ENCODE measurements at regions of chr17 and their contacts with region 1.

Region 1: GRCh38 chr17:79741751-79742588 is 11.2 kb downstream of the ENPP7 start:
- DNase-seq: peak; percentile 87
- ATAC-seq: peak; percentile 64
- H3K4me3 ChIP-seq: peak overlapping the region; percentile 59
- H3K27ac ChIP-seq: no peak overlapping the region
- H3K4me1 ChIP-seq: peaks cover 36% of the 10 kb centered on the region
- H3K27me3 ChIP-seq: no peaks in the 10 kb centered on the region
- CTCF ChIP-seq: peak; percentile 98

Region 2: DNA sequence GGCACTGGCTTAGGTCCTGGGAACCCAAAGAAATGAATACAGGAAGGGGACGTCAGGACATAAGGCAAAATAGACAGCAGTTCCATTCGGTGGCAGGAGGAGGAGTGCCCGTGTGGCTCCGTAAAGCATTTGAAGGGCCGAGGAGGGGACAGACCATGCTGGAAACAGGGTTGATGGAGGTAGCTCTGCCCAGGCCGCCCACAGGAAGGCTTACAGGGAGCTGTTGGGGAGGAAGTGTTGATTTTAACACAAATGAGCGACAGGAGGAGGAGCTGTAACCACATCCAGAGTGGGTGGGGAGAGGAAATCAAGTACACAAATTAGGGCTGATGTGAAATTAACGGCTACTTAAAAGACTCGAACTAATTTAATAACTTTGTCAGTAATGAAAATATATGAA is 185.7 kb before region 1 on chr17:
- CTCF ChIA-PET with region 1: interaction called, 3 read pairs
- POLR2A ChIA-PET with region 1: interaction called, 11 read pairs
- intact Hi-C with region 1: no loop called
- DNase-seq: no peak
- ATAC-seq: no peak
- H3K4me3 ChIP-seq: no peak overlapping the region
- H3K27ac ChIP-seq: no peak overlapping the region
- H3K4me1 ChIP-seq: no peaks in the 10 kb centered on the region
- H3K27me3 ChIP-seq: peaks cover 42% of the 10 kb centered on the region
- CTCF ChIP-seq: no peak

Region 3: GRCh38 chr17:79810130-79811010 is 68.4 kb after region 1 on chr17:
- CTCF ChIA-PET with region 1: interaction called, 17 read pairs
- POLR2A ChIA-PET with region 1: no interaction called
- intact Hi-C with region 1: no loop called
- DNase-seq: peak; percentile 93
- ATAC-seq: peak; percentile 81
- H3K4me3 ChIP-seq: peak overlapping the region; percentile 59
- H3K27ac ChIP-seq: no peak overlapping the region
- H3K4me1 ChIP-seq: peaks cover 29% of the 10 kb centered on the region
- H3K27me3 ChIP-seq: peaks cover 62% of the 10 kb centered on the region
- CTCF ChIP-seq: no peak

Region 4: DNA sequence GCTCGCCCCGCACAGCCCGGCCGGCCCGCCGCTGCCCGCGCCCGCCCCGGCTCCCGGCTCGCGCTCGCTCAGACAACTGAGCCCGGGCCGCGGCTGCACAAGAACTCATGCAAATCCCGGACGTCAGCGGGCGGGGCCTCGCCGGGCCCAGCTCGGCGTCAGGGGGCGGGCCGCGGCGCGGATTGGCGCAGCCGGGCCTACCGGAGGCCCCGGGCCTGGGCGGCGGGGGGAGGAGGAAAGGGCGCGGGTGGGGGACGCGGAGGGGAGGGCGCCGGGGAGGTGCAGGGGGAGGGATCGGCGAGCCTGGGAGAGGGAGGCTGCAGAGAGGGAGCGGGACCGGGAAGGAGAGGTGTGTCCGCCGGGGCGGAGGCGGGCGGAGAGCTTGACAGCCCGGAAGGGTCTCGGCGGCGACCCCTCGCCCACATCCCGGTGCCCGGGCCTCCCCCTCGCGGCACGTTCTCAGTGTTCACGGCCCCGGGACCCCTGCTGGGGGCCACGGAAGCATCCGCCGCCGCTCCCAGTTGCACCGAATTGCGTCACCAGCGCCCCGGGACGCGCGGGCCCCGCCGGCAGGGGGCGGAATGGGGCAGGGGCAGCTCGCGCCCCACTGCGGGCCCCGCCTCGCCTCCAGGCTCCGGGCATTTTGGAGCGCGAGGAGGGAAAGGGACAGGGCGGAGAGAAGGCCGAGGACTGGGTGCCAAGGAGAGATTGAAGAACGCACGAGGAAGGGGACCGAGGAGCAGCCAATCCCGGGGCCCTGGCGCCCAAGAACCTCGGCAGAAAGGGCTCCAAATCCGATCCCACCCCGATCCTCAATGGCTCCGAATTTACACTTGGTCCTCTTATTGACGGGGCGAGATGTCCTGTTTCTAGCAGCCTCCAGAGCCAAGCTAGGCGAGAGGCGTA is 97.6 kb after region 1 on chr17 and contains the start of gene CBX4:
- CTCF ChIA-PET with region 1: interaction called, 3 read pairs
- POLR2A ChIA-PET with region 1: interaction called, 13 read pairs
- intact Hi-C with region 1: loop called (anchors 10 kb)
- DNase-seq: peak; percentile 98
- ATAC-seq: peak; percentile 70
- H3K4me3 ChIP-seq: peak within 1 kb of the TSS; percentile 99
- H3K27ac ChIP-seq: peak within 1 kb of the TSS; percentile 47
- H3K4me1 ChIP-seq: peaks cover 43% of the 10 kb centered on the region
- H3K27me3 ChIP-seq: peaks cover 39% of the 10 kb centered on the region
- CTCF ChIP-seq: peak; percentile 92
- total RNA-seq, gene CBX4: 53.5 and 75.4 TPM in 2 replicates

Region 5: DNA sequence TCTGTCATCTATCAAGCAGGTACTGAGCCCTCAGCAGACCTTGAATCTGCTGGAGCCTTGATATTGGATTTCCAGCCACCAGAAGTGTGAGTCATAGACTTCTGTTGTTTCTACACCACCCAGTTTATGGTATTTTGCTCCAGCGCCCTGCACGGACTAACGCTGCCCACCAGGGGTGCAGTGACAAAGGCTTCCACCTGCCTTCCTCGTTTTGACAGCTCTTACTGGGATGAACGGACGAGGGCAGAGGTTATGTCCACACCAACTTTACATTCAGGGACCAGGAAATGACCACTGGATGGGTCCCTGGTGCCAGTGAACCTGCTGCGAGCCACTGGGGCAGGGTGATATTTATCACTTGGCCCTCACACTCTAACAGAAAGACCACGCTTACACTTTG is 163.9 kb after region 1 on chr17:
- CTCF ChIA-PET with region 1: interaction called, 13 read pairs
- POLR2A ChIA-PET with region 1: interaction called, 5 read pairs
- intact Hi-C with region 1: no loop called
- DNase-seq: peak; percentile 78
- ATAC-seq: peak; percentile 84
- H3K4me3 ChIP-seq: no peak overlapping the region
- H3K27ac ChIP-seq: no peak overlapping the region
- H3K4me1 ChIP-seq: no peaks in the 10 kb centered on the region
- H3K27me3 ChIP-seq: peaks cover 29% of the 10 kb centered on the region
- CTCF ChIP-seq: peak; percentile 68

Region 6: GRCh38 chr17:79915850-79916430 is 174.0 kb after region 1 on chr17:
- CTCF ChIA-PET with region 1: interaction called, 16 read pairs
- POLR2A ChIA-PET with region 1: no interaction called
- intact Hi-C with region 1: loop called (anchors 5 kb)
- DNase-seq: peak; percentile 80
- ATAC-seq: peak; percentile 48
- H3K4me3 ChIP-seq: no peak overlapping the region
- H3K27ac ChIP-seq: no peak overlapping the region
- H3K4me1 ChIP-seq: peaks cover 33% of the 10 kb centered on the region
- H3K27me3 ChIP-seq: no peaks in the 10 kb centered on the region
- CTCF ChIP-seq: peak; percentile 55; the same call in 1 of the 2 replicates

Region 7: DNA sequence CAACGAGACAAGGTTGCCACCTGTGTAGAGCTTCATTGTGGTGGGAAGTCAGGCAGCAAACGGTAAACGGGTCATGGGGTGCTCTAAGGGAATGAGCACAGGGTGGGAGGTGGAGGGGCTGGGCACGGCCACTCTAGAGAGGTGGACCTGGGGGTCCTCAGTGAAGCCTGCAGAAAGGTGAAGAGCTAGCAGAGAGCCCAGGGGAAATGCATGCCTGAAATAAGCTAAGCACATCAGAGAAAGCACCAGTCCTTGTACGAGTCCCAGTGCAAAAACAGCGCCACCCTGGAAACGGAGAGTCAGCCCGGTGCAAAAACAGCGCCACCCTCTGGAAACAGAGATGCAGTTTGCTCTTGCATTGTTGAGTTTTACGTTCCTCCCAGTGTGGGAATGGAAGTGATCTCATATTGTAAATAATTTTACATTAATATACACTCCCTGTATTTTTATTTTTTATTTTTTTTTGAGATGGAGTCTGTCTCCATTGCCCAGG is 228.7 kb after region 1 on chr17:
- CTCF ChIA-PET with region 1: interaction called, 11 read pairs
- POLR2A ChIA-PET with region 1: no interaction called
- intact Hi-C with region 1: no loop called
- DNase-seq: peak; percentile 81
- ATAC-seq: peak; percentile 84
- H3K4me3 ChIP-seq: no peak overlapping the region
- H3K27ac ChIP-seq: no peak overlapping the region
- H3K4me1 ChIP-seq: no peaks in the 10 kb centered on the region
- H3K27me3 ChIP-seq: no peaks in the 10 kb centered on the region
- CTCF ChIP-seq: peak; percentile 96